ENCODE measurements at regions of chr10 and their contacts with region 1.

Region 1: DNA sequence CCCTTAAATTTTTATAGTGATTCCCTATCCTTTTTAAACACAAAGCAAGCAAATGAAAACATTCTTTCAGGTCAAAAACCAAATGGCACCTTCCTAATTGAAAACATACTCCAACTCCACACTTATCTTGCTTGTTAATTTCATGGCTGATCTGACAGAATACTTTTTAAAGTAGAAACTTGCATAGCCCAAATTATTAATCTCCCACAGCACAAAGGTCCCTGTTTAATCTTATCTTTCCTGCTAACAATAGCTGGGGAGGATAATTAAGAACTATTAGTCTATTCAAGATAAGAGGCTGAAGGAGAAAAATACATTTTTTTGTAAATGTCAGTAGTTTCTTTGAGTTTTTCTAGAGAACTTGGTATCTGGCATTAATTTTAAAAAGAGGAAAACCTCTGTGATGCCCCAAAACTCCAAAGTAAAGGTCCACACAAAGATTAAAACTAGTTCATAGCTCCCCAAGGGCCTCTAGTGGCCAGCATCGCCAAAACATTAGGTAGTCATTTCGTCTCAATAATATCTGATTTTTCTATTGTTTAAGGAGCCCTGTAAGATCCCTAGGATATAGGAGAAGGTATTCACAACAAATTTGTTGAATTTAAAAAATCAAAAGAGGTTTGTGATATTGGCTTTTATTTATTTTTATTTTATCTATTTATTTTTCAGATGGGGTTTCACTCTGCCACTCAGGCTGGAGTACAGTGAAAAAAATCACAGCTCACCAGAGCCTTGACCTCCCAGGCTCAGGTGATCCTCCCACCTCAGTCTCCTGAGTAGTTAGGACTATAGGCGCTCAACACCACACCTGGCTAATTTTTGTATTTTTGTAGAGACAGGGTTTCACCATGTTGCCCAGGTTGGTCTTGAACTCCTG is 14.7 kb downstream of the CDNF start:
- DNase-seq: peak; percentile 70
- H3K4me3 ChIP-seq: no peak overlapping the region
- H3K27ac ChIP-seq: no peak overlapping the region
- H3K4me1 ChIP-seq: peaks cover 20% of the 10 kb centered on the region
- H3K27me3 ChIP-seq: peaks cover 0 to 3% of the 10 kb centered on the region in 2 experiments
- CTCF ChIP-seq: peak; percentile 59 to 66
- POLR2A ChIP-seq: no peak

Region 2: DNA sequence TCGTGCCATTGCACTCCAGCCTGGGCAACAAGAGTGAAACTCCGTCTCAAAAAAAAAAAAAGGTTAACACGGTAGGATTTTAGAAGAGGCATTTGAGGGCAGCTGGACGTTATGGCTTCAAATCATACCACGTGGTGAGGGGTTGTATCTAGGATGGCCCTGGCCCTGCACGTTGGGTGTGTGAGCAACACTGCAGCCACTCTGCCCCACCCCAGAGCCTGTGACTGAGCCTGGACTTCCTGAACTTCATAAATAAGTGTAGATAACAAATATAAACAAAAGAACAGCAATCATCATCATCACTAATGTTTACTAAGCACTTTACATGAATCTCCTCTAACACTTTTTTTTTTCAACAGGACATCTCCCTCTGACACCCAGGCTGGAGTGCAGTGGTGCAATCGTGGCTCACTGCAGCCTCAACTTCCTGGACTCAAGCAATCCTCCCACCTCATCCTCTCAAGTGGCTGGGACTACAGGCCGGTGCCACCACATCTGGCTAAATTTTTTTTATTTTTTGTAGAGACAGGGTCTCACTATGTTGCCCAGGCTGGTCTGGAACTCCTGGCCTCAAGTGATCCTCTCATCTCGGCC is 322.8 kb before region 1 on chr10:
- CTCF ChIA-PET with region 1: interaction called, 32 read pairs
- POLR2A ChIA-PET with region 1: no interaction called
- dilution Hi-C with region 1: no loop called
- intact Hi-C with region 1: loop called (anchors 1 kb)
- DNase-seq: no peak
- H3K4me3 ChIP-seq: no peak overlapping the region
- H3K27ac ChIP-seq: no peak overlapping the region
- H3K4me1 ChIP-seq: no peaks in the 10 kb centered on the region
- H3K27me3 ChIP-seq: no peaks in the 10 kb centered on the region
- CTCF ChIP-seq: no peak
- POLR2A ChIP-seq: no peak

Region 3: GRCh38 chr10:14547816-14548215 is 275.3 kb before region 1 on chr10:
- CTCF ChIA-PET with region 1: interaction called, 13 read pairs
- POLR2A ChIA-PET with region 1: no interaction called
- dilution Hi-C with region 1: no loop called
- intact Hi-C with region 1: no loop called
- DNase-seq: no peak
- H3K4me3 ChIP-seq: no peak overlapping the region
- H3K27ac ChIP-seq: no peak overlapping the region
- H3K4me1 ChIP-seq: peaks cover 30% of the 10 kb centered on the region
- H3K27me3 ChIP-seq: no peaks in the 10 kb centered on the region
- CTCF ChIP-seq: peak; percentile 20 to 22
- POLR2A ChIP-seq: no peak

Region 4: DNA sequence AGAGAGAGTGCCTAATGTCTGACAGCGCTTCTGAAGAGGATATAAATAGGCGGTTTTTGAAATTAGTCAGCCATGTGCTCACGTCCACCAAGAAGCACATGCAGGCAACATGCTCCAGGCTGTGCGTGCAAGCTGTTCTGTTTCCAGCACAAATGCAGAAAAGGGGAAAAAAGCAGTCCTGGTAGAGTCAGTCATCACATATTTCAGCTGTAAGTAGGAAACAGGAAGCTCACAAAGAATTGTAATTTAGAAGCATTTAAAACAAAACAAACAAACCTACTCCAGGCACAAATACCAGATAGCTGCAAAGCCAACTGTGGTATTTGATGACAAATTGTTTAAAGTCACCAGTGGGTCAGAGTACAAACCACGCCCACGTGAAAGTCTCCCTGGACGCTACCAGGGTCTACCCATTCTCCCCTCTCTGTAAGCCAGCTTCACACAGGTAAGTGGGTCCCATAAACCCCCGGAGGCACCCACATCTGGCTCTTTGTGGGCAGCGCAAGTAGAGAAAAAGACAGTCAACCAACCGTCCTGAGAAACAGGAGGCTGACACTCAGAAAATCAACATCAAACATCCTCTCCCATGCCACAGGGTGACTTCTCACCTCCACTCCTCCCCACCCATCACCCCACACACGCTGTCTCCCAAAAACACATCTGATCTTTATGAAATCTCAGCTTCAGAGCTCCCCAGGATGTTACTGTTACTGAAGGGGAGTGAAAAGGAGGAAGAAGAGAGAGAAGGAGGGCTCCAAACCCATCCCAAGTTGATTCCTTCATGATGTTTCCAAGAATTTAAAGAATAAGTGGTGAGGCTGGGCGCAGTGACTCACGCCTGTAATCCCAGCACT is 234.8 kb before region 1 on chr10:
- CTCF ChIA-PET with region 1: interaction called, 16 read pairs
- POLR2A ChIA-PET with region 1: interaction called, 7 read pairs
- dilution Hi-C with region 1: no loop called
- intact Hi-C with region 1: loop called (anchors 1 kb)
- DNase-seq: peak; percentile 97
- H3K4me3 ChIP-seq: peak overlapping the region in 1 of 3 experiments; percentile 11
- H3K27ac ChIP-seq: peak overlapping the region; percentile 99
- H3K4me1 ChIP-seq: peaks cover 47% of the 10 kb centered on the region
- H3K27me3 ChIP-seq: no peaks in the 10 kb centered on the region
- CTCF ChIP-seq: no peak
- POLR2A ChIP-seq: no peak

Region 5: DNA sequence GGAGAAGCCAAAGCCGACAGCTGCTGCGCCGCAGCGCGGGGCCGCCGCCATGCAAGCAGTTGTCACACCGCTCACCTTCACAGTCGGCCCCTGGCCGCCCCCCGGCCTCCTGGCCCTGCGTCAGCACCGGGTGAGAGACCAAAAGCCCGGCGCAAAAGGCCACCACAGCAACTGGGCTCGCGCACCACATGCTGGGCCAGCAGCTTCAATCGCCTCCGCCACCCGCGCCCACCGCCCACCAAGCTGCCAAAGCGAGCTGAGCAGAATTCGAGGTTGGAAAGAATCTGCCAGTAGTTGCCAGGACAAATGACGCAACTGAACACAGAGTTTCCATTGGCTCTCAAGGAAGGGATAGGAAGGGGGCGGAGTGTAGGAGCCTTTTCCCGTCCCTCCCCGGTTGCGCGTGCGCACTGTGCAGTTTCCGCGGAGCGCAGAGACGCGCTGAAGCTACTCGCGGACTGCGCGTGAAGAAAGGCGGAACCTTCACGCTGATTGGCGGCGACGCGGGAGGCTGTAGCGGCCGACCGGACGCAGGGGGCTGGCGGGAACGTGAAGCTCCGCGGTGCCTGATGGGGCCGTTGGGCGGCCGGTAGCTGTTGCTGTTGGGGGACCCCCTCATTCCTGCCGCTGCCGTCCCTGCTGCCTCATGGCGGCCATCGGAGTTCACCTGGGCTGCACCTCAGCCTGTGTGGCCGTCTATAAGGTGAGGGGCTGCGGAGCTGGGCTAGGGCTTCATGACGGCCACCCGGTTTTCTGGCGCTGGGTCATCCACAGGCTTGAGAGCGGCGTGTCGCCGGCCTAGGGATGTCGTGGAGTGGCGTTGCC is 14.9 kb after region 1 on chr10 and contains the starts of genes CDNF, HSPA14 and MSANTD7:
- CTCF ChIA-PET with region 1: interaction called, 19 read pairs
- POLR2A ChIA-PET with region 1: interaction called, 3 read pairs
- dilution Hi-C with region 1: no loop called
- intact Hi-C with region 1: no loop called
- DNase-seq: peak; percentile 100
- H3K4me3 ChIP-seq: peak within 1 kb of the TSS; percentile 47 to 81 (median 71)
- H3K27ac ChIP-seq: peak within 1 kb of the TSS; percentile 74
- H3K4me1 ChIP-seq: peaks cover 11% of the 10 kb centered on the region
- H3K27me3 ChIP-seq: no peaks in the 10 kb centered on the region
- CTCF ChIP-seq: no peak
- POLR2A ChIP-seq: peak; percentile 92
- total RNA-seq, gene CDNF: 0.58 and 0.99 TPM in 2 replicates
- total RNA-seq, gene HSPA14: 15.7 and 18.0 TPM in 2 replicates
- total RNA-seq, gene MSANTD7: 13.1 and 13.6 TPM in 2 replicates

Region 6: GRCh38 chr10:14852236-14852635 is 29.1 kb after region 1 on chr10:
- CTCF ChIA-PET with region 1: no interaction called
- POLR2A ChIA-PET with region 1: no interaction called
- dilution Hi-C with region 1: no loop called
- intact Hi-C with region 1: no loop called
- DNase-seq: no peak
- H3K4me3 ChIP-seq: no peak overlapping the region
- H3K27ac ChIP-seq: no peak overlapping the region
- H3K4me1 ChIP-seq: no peaks in the 10 kb centered on the region
- H3K27me3 ChIP-seq: no peaks in the 10 kb centered on the region
- CTCF ChIP-seq: no peak
- POLR2A ChIP-seq: no peak